ENCODE measurements at regions of chr18 and their contacts with region 1.

Region 1: GRCh38 chr18:75429975-75430374 is 2.5 kb upstream of the SMIM21 start:
- DNase-seq: no peak
- H3K4me3 ChIP-seq: no peak overlapping the region
- H3K27ac ChIP-seq: no peak overlapping the region
- H3K4me1 ChIP-seq: no peaks in the 10 kb centered on the region
- H3K27me3 ChIP-seq: no peaks in the 10 kb centered on the region
- CTCF ChIP-seq: no peak
- POLR2A ChIP-seq: no peak

Region 2: GRCh38 chr18:73986711-73987110 is 1443.3 kb before region 1 on chr18:
- intact Hi-C with region 1: no loop called
- DNase-seq: no peak
- H3K4me3 ChIP-seq: no peak overlapping the region
- H3K27ac ChIP-seq: no peak overlapping the region
- H3K4me1 ChIP-seq: no peaks in the 10 kb centered on the region
- H3K27me3 ChIP-seq: no peaks in the 10 kb centered on the region
- CTCF ChIP-seq: no peak
- POLR2A ChIP-seq: no peak

Region 3: DNA sequence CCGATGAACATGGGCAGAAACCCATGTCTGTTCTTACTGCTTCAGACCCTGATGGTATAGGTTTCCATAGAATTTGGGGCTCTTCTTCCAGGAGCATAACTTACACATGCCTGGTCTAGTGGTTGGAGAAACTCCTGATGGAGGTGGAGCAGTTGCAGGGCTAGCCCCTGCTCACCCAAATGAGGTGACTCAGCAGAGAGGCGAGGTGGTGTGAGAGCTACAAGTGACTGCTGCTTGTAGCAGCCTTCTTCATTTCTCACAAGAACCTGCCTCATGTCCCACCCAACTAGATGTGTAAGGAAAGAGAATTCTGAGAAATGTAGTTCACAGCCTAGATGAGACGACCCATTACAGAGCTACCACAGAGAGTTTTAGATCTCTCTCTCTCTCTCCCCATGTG is 727.0 kb before region 1 on chr18:
- intact Hi-C with region 1: loop called (anchors 5 kb)
- DNase-seq: no peak
- H3K4me3 ChIP-seq: no peak overlapping the region
- H3K27ac ChIP-seq: no peak overlapping the region
- H3K4me1 ChIP-seq: no peaks in the 10 kb centered on the region
- H3K27me3 ChIP-seq: no peaks in the 10 kb centered on the region
- CTCF ChIP-seq: no peak
- POLR2A ChIP-seq: no peak

Region 4: DNA sequence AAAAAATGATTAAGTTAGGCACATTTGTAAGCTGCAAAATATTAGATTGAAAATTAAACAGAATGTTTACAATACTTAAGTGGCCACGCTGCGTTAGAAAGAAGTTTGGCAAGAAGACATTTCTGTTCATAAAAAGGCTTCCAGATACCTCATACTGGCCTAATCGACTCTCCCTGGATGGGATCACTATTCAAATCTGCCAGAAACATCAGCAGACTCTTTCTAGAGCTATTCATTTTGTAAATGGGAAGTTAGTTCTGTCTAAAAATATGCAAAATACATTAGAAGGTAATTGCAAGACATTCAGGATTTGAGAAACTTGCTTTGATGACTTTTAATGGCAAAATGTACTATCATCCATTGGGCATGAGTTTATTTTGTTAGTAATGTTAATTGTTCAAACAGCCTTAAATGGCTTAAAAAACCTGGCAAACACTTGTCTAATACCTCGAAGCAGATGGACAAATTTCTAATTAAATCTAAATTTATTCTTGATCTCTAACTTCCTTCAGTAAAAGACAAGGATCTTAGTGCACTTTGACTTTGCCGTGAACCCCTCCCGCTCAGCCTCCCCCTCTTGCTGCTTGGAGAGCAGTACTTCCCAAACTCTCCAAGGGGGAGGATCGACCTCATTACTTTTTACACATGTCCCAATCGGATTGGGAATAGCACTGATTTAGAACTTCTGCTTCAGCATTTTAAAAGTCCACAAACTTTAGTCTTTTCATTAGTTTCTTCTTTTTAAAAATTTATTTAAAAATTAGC is 106.0 kb before region 1 on chr18:
- intact Hi-C with region 1: no loop called
- DNase-seq: no peak
- H3K4me3 ChIP-seq: no peak overlapping the region
- H3K27ac ChIP-seq: no peak overlapping the region
- H3K4me1 ChIP-seq: no peaks in the 10 kb centered on the region
- H3K27me3 ChIP-seq: no peaks in the 10 kb centered on the region
- CTCF ChIP-seq: no peak
- POLR2A ChIP-seq: no peak

Region 5: GRCh38 chr18:75638776-75639471 is 208.9 kb after region 1 on chr18:
- intact Hi-C with region 1: no loop called
- DNase-seq: no peak
- H3K4me3 ChIP-seq: peak overlapping the region; percentile 17 to 55 (median 34)
- H3K27ac ChIP-seq: no peak overlapping the region
- H3K4me1 ChIP-seq: no peaks in the 10 kb centered on the region
- H3K27me3 ChIP-seq: no peaks in the 10 kb centered on the region
- CTCF ChIP-seq: no peak
- POLR2A ChIP-seq: no peak